Ovary (tissue), 10 donors: ENCODE measurements at regions of chrX and their contacts with region 1.

Region 1: GRCh38 chrX:43654431-43655150 is 1.5 kb upstream of the MAOA start:
- DNase-seq: peak; percentile 90 to 95 (median 93)
- H3K4me3 ChIP-seq: peak overlapping the region; percentile 60
- H3K27ac ChIP-seq: peak overlapping the region; percentile 33 to 79
- H3K4me1 ChIP-seq: no peaks in the 10 kb centered on the region
- H3K27me3 ChIP-seq: no peaks in the 10 kb centered on the region
- CTCF ChIP-seq: peak in 2 of 3 donors; percentile 23 to 33
- EP300 ChIP-seq: no peak
- POLR2A ChIP-seq: peak; percentile 81

Region 2: GRCh38 chrX:43436517-43436916 is 218.1 kb before region 1 on chrX:
- intact Hi-C with region 1: no loop called
- DNase-seq: no peak
- H3K4me3 ChIP-seq: no peak overlapping the region
- H3K27ac ChIP-seq: no peak overlapping the region
- H3K4me1 ChIP-seq: no peaks in the 10 kb centered on the region
- H3K27me3 ChIP-seq: no peaks in the 10 kb centered on the region
- CTCF ChIP-seq: no peak
- EP300 ChIP-seq: no peak
- POLR2A ChIP-seq: no peak

Region 3: DNA sequence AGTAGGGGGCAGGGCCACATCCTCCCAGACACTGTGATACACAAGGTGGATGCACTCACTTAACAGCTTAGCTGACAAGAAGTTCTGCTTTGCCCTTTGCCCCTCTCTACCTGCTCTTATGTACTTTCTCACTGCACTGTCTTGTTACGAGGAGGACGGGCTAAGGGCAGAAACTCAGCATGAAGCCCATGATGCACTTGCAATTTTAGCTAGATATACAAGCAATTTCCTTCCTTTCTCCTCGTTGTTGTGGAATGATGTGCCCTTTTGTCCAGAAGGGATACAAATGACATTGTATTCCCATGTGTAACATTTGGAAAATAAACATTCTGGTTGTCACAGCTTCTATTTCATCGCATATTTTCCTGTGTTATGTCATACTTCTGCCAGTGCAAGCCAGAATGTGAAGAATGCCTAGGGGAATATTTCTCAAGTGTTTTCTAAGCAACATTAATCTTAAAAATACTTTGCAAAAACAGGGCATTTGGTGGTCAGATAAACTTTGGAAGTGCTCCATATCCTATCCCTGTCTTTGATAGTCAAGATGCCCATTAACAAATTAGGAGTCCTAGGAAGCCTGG is 48.7 kb after region 1 on chrX:
- intact Hi-C with region 1: loop called in 1 of 4 experiments (anchors 10 kb)
- DNase-seq: no peak
- H3K4me3 ChIP-seq: no peak overlapping the region
- H3K27ac ChIP-seq: no peak overlapping the region
- H3K4me1 ChIP-seq: peaks cover 6% of the 10 kb centered on the region
- H3K27me3 ChIP-seq: no peaks in the 10 kb centered on the region
- CTCF ChIP-seq: no peak
- EP300 ChIP-seq: no peak
- POLR2A ChIP-seq: no peak